ENCODE measurements at regions of chr2 and their contacts with region 1.

Region 1: GRCh38 chr2:8525582-8526402 is 156.1 kb upstream of the ID2 start:
- DNase-seq: no peak
- H3K4me3 Mint-ChIP-seq: no peak overlapping the region
- H3K27ac Mint-ChIP-seq: no peak overlapping the region
- H3K4me1 Mint-ChIP-seq: peaks cover 58% of the 10 kb centered on the region
- H3K27me3 Mint-ChIP-seq: peaks cover 3% of the 10 kb centered on the region

Region 2: DNA sequence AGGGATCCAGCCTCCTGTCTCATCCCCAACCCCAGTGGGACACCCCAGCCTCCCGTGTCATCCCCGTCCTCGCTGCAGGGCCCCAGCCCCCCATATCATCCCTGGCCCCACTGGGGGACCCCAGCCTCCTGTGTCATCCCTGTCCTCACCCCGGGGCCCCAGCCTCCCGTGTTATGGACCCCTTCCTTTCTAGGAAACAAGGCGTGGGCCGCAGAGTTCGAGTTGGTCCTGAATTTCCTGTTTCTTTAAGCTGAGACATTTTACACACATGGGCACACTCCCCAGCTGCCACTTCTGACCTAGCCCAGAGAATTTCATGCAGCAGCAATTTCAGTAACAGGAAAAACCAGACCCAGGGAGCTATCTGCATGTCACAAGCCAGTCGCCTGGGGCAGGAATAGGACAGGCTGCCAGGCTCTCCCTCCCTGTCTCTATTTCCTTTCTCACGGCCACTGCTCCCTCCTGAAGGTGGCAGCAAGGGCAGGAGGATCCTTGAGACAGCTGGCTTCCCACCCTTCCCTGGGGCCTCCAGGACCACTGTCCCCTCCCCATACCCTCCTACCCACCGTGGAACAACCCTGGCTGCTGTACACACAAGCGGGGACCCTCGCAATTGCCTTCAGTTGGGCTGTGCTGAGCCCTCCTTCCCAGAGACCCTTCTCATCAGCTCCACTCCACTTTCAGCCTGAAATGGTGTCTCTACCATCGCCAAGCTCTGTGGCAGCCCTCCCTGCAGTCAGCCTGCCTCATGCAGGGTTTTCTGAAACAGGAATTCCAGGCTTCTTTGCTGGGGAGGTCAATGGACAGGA is 14.2 kb after region 1 on chr2:
- CTCF ChIA-PET with region 1: interaction called, 9 read pairs
- POLR2A ChIA-PET with region 1: interaction called, 46 read pairs
- DNase-seq: no peak
- H3K4me3 Mint-ChIP-seq: no peak overlapping the region
- H3K27ac Mint-ChIP-seq: peak overlapping the region; percentile 100
- H3K4me1 Mint-ChIP-seq: peaks cover 89% of the 10 kb centered on the region
- H3K27me3 Mint-ChIP-seq: no peaks in the 10 kb centered on the region

Measured in activated CD4-positive, alpha-beta memory T cell treated with anti-CD3 and anti-CD28 coated beads, Interleukin-2, amount 10 ng/mL, durations not matched to agents 7 days and 5 days (primary cell).